Heart left ventricle (tissue), 16 donors: ENCODE measurements at regions of chr22 and their contacts with region 1.

Region 1: GRCh38 chr22:38569972-38570778 is at the start of gene DMC1:
- DNase-seq: peak; percentile 94 to 96 (median 95)
- ATAC-seq: peak; percentile 90 to 98 (median 98)
- H3K4me3 ChIP-seq: peak within 1 kb of the TSS; percentile 45 to 82 (median 68)
- H3K27ac ChIP-seq: peak within 1 kb of the TSS in 11 of 12 donors; percentile 62 to 94 (median 87)
- H3K4me1 ChIP-seq: peaks cover 0 to 38% (median 15%) of the 10 kb centered on the region in 12 donors
- H3K27me3 ChIP-seq: peaks cover 0 to 5% (median 0%) of the 10 kb centered on the region in 9 donors
- CTCF ChIP-seq: no peak
- POLR2A ChIP-seq: peak in 1 of 2 donors; percentile 46
- total RNA-seq, gene DMC1: 0.16 to 2.4 (median 1.1) TPM

Region 2: GRCh38 chr22:38069372-38070249 is 500.6 kb before region 1 on chr22:
- intact Hi-C with region 1: loop called in 1 of 10 experiments (anchors 5 kb)
- DNase-seq: peak; percentile 82 to 93 (median 85)
- ATAC-seq: peak; percentile 90 to 93 (median 92)
- H3K4me3 ChIP-seq: peak overlapping the region in 7 of 12 donors; percentile 7 to 37 (median 35)
- H3K27ac ChIP-seq: peak overlapping the region; percentile 74 to 91 (median 85)
- H3K4me1 ChIP-seq: peaks cover 0 to 44% (median 29%) of the 10 kb centered on the region in 12 donors
- H3K27me3 ChIP-seq: no peaks in the 10 kb centered on the region
- CTCF ChIP-seq: peak; percentile 37 to 78 (median 60)
- POLR2A ChIP-seq: no peak

Region 3: GRCh38 chr22:38412435-38413084 is 157.6 kb before region 1 on chr22:
- intact Hi-C with region 1: loop called in 7 of 10 experiments (anchors 2 to 10 kb)
- DNase-seq: peak in 1 of 5 donors; percentile 12
- ATAC-seq: peak in 3 of 4 donors; percentile 15 to 38 (median 28)
- H3K4me3 ChIP-seq: peak overlapping the region in 11 of 12 donors; percentile 14 to 48 (median 32)
- H3K27ac ChIP-seq: peak overlapping the region in 8 of 12 donors; percentile 57 to 89 (median 70)
- H3K4me1 ChIP-seq: peaks cover 0 to 32% (median 14%) of the 10 kb centered on the region in 12 donors
- H3K27me3 ChIP-seq: no peaks in the 10 kb centered on the region
- CTCF ChIP-seq: peak; percentile 61 to 89 (median 80)
- POLR2A ChIP-seq: no peak

Region 4: DNA sequence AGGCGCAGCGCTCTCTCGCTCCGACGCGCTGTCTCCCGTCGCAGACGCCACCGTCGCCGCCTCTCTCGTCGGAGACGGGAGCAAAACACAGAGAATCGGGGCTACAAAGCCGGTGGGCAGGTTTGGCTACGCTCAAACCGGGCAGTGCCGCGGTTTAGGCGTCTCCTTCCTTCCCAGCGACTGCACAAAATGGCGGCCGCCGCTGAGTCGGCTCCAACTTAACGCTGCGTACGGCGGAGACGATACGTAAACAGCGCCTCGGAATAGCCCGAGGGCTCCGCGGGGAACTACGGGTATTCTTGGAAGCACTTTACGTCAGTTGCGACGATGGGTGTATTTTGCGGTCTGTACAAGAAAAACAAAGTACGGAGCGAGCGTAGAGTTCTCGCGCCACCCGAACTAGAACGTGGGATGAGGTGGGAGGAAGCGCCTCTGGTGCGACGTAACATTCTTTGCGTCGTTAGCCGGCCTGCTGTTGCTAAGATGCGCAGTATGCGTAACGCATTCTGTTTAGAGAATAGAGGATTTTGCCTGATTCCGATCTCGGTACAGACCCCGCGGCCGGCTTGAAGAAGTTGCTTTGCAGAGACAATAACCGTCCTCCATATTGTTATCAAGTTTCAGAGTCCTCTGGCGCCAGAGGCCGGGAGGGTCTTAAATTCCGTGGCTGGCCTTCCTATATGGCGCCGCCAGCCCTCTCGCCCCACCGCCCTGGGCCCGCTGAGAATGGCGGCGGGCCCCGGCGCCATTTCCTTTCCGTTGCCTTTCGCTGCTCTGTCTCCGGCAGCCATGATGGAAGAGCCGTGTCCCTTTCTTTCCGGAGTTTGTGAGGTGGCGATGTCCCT is 63.8 kb before region 1 on chr22 and contains the start of gene DDX17:
- intact Hi-C with region 1: loop called in 7 of 10 experiments (anchors 1 to 5 kb)
- DNase-seq: peak; percentile 94 to 95 (median 94)
- ATAC-seq: peak; percentile 82 to 91 (median 86)
- H3K4me3 ChIP-seq: peak within 1 kb of the TSS; percentile 67 to 95 (median 91)
- H3K27ac ChIP-seq: peak within 1 kb of the TSS; percentile 98 to 100 (median 100)
- H3K4me1 ChIP-seq: peaks cover 5 to 44% (median 34%) of the 10 kb centered on the region in 12 donors
- H3K27me3 ChIP-seq: no peaks in the 10 kb centered on the region
- CTCF ChIP-seq: peak in 1 of 12 donors; percentile 28
- POLR2A ChIP-seq: peak; percentile 9 to 53
- total RNA-seq, gene DDX17: 149 to 202 (median 170) TPM

Region 5: GRCh38 chr22:38824585-38824984 is 254.4 kb after region 1 on chr22:
- intact Hi-C with region 1: no loop called
- DNase-seq: peak in 4 of 5 donors; percentile 51 to 72 (median 60)
- ATAC-seq: peak in 3 of 4 donors; percentile 79 to 89 (median 82)
- H3K4me3 ChIP-seq: no peak overlapping the region
- H3K27ac ChIP-seq: no peak overlapping the region
- H3K4me1 ChIP-seq: no peaks in the 10 kb centered on the region
- H3K27me3 ChIP-seq: no peaks in the 10 kb centered on the region
- CTCF ChIP-seq: peak in 10 of 12 donors; percentile 9 to 56 (median 34)
- POLR2A ChIP-seq: no peak